Panc1 (cell line): ENCODE measurements at regions of chr9 and their contacts with region 1.

Region 1: DNA sequence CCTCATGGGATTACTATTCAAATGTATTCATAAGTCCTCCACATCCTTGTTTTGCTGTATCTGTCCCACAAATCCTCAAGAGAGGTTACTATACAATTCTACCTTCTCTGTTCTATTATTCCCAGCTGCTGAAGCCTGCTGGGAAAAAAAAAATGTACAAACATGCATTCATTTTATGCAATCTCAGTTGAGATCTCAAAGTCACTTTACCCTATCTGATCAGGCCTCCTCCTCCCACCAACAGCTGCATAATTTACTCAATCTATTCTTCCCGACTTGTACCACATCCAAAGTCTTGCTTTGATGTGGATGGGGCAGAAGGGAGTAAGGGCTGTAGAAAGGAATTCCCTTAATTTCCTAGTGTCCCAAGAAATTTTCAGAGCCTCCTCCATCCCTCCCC is 28.6 kb downstream of the PSIP1 start:
- DNase-seq: no peak
- ATAC-seq: no peak
- H3K4me3 ChIP-seq: no peak overlapping the region
- H3K27ac ChIP-seq: no peak overlapping the region
- H3K4me1 ChIP-seq: no peaks in the 10 kb centered on the region
- H3K27me3 ChIP-seq: no peaks in the 10 kb centered on the region
- CTCF ChIP-seq: no peak

Region 2: DNA sequence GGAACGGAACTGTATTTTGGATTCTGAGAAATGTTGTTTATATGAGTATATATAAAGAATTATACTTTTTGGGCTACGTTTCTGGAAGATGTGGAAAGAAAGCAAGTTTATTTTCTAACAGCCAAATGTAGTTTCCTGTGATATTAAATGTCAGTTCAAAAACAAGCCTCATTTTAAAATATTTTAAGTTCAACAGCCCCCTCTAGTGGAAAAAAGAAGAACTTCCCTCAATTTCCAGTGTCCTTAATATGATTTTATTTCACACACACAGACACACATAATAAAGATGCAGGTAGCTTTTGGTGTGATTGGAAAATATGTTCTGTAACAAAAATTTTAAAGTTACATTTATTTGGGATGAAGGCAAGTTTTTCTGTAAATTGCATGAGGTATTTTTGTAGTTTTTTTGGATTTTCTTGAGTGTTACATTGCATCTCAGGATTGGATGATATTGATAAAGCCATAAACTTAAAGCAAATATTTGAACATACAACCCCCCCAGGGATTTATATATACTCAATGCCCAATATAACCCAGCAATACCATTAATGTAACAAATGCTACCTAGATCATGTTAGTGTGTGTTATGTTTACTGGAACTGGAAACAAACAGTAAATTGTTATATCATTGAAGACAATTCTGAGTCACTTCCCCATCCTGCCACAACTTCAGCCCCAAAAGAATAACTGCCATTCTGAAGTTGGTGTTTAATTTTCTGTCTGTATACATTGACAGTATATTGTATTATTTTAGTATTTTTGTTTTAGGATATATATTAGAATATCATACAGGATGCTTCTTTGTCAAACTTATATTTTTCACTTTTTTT is 124.7 kb after region 1 on chr9:
- CTCF ChIA-PET with region 1: no interaction called
- POLR2A ChIA-PET with region 1: no interaction called
- in situ Hi-C with region 1: no loop called
- intact Hi-C with region 1: loop called (anchors 5 kb)
- DNase-seq: no peak
- ATAC-seq: no peak
- H3K4me3 ChIP-seq: no peak overlapping the region
- H3K27ac ChIP-seq: no peak overlapping the region
- H3K4me1 ChIP-seq: no peaks in the 10 kb centered on the region
- H3K27me3 ChIP-seq: no peaks in the 10 kb centered on the region
- CTCF ChIP-seq: peak; percentile 32; the same call in 1 of the 2 replicates